Activated T-helper 1 cell treated with anti-CD3 and anti-CD28 coated beads, Interleukin-12 subunit alpha, Interleukin-12 subunit beta, Interleukin-2, Interleukin-4 antibody, amounts not matched to agents 30 ng/mL and 10 ng/mL and 1 ng/mL, durations not matched to agents 14 hours and 24 hours and 36 hours (primary cell): ENCODE measurements at regions of chr17 and their contacts with region 1.

Region 1: DNA sequence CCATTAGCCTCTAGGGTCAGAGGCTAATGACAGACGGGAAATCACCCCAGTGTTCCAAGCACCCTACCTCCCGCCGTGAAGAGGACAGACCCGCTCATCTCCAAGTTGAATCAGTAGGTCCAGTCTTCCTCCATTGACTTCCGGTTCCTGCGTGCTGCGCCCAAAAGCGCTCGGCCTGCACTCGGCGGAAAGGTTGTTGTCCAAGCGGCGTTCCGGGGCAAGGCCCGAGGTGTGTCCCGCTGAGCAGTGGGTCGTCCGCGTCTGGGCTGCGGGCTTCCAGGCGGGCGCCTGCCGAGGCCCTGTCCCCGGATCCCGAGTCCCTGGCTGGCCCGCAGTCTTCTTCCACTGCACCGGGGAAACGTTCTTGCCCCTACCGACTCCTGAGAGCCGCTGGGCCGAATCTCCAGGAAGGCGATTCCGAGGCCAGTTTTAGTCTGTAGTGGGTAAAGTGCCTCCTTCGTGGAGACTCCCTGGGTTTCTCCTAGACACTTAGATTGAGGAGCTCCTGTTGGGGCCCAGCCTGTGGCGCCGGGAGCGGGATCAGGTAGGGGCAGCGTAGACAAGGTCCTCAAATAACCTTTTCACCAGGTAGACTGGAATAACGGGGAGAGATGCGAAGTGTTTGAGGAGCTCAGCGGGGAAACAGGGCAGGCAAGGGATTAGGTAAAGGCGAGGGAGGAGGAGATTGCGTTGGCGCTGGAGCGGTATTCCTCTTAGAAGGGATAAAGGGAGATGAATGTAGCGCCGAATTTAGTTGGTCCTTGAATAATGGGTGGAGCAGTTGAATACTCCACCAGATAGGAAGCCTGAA is at the start of gene TEFM:
- DNase-seq: peak; percentile 86
- H3K4me3 Mint-ChIP-seq: peak within 1 kb of the TSS; percentile 98
- H3K27ac Mint-ChIP-seq: peak within 1 kb of the TSS; percentile 87
- H3K4me1 Mint-ChIP-seq: peaks cover 35% of the 10 kb centered on the region
- H3K27me3 Mint-ChIP-seq: no peaks in the 10 kb centered on the region
- total RNA-seq, gene TEFM: 16.9 and 19.5 TPM in 2 replicates

Region 2: GRCh38 chr17:30831663-30832437 is 74.5 kb before region 1 on chr17 and contains the start of gene ATAD5:
- intact Hi-C with region 1: loop called (anchors 2 kb)
- DNase-seq: peak; percentile 86
- H3K4me3 Mint-ChIP-seq: peak within 1 kb of the TSS; percentile 96
- H3K27ac Mint-ChIP-seq: peak within 1 kb of the TSS; percentile 86
- H3K4me1 Mint-ChIP-seq: peaks cover 43% of the 10 kb centered on the region
- H3K27me3 Mint-ChIP-seq: no peaks in the 10 kb centered on the region
- total RNA-seq, gene ATAD5: 26.2 and 28.7 TPM in 2 replicates

Region 3: GRCh38 chr17:31156326-31156725 is 250.0 kb after region 1 on chr17:
- intact Hi-C with region 1: no loop called
- DNase-seq: no peak
- H3K4me3 Mint-ChIP-seq: no peak overlapping the region
- H3K27ac Mint-ChIP-seq: no peak overlapping the region
- H3K4me1 Mint-ChIP-seq: peaks cover 19% of the 10 kb centered on the region
- H3K27me3 Mint-ChIP-seq: no peaks in the 10 kb centered on the region

Region 4: GRCh38 chr17:31313982-31314784 is 407.9 kb after region 1 on chr17 and contains the start of gene EVI2B:
- intact Hi-C with region 1: loop called (anchors 2 kb)
- DNase-seq: no peak
- H3K4me3 Mint-ChIP-seq: peak within 1 kb of the TSS; percentile 92
- H3K27ac Mint-ChIP-seq: peak within 1 kb of the TSS; percentile 90
- H3K4me1 Mint-ChIP-seq: peaks cover 74% of the 10 kb centered on the region
- H3K27me3 Mint-ChIP-seq: no peaks in the 10 kb centered on the region
- total RNA-seq, gene EVI2B: 21.7 and 25.1 TPM in 2 replicates